Brain microvascular endothelial cell (primary cell): ENCODE measurements at regions of chr16 and their contacts with region 1.

Region 1: DNA sequence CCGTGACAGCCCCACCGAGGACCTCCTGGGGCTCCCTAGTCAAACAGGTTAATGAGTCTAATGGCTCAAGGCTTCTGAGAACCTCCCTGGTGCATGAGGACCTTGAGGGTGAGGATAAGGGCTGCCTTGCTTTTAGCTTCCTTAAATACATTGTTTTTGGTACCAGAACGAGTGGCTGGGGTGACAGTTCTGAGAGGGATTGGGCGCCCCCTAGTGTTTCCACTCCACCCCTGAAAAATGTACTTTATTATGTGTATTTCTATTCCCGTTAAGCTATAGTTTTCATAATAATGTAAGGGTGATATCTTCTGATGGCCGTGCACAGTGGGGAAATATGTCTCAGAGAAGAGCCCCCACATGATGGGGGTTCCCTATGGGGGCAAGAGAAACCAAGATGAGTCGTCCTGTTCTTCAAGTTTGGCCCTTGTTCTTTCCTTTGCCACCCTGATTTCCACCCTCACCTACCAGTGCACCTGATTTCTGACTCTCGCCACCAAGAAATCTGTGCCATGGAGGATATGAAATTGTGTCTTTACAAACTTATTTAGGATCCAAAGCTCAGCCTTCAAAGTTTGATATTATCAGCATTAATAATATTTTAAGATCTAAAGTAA is 14.5 kb upstream of the VWA3A start:
- DNase-seq: peak; percentile 71
- H3K4me3 ChIP-seq: no peak overlapping the region
- H3K27ac ChIP-seq: no peak overlapping the region
- H3K27me3 ChIP-seq: no peaks in the 10 kb centered on the region
- CTCF ChIP-seq: peak; percentile 90

Region 2: DNA sequence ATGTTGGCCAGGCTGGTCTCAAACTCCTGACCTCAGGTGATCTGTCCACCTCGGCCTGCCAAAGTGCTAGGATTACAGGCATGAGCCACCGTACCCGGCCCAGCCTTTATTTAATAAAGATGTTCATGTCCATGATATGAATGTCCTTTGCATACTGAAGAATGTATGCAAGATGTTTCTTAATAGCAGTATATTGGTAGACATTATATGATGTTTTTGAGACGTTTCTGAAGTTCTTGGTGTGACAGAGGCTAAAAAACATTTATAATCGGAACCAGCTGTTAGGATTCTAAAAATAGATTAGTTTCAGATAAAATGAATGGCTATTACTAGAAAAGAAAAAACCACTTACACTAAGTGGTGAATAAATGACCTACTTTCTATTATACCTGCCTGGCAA is 88.7 kb before region 1 on chr16:
- in situ Hi-C with region 1: loop called (anchors 25 kb)
- DNase-seq: no peak
- H3K4me3 ChIP-seq: no peak overlapping the region
- H3K27ac ChIP-seq: no peak overlapping the region
- H3K27me3 ChIP-seq: no peaks in the 10 kb centered on the region
- CTCF ChIP-seq: no peak